Activated naive CD4-positive, alpha-beta T cell treated with anti-CD3 and anti-CD28 coated beads for 36 hours (primary cell): ENCODE measurements at regions of chr5 and their contacts with region 1.

Region 1: DNA sequence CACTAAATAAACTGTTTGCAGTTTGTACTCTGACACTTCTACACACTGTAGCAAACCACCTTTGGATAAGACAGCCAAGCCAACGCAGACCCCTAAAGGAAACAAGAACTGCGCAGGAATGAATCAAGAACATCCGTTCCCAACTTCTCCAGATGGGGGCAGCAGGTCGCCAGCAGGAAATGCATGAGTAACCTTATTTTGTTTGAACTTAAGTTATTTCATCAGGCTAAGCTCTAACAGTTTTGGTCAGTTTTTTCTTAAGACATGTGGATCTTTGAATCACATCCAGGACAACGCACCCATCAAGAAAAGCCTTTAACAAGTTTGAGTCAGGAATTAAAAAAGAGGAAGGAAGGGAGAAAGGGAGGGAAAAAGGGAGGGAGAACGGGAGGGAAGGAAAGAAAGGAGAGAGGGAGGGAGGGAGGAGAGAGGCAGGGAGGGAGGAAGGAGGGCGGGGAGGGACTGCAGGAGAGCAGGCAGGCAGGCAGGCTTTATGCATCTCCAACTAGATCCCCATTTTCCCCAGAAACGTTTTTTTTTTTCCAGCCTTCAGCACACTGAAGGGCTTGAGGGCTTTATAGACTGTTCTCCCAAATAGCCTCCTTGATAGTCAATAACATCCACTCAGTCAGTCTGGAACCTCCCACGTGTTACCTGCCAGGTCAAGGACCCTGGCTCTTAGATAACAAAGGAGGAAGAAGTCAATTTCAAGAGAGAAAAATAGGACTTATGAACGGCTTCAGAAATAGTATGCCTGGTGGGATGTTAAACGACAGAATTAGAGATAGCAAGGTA is 22.2 kb downstream of the BHMT start:
- DNase-seq: peak; percentile 88
- H3K4me3 Mint-ChIP-seq: peak overlapping the region; percentile 67
- H3K27ac Mint-ChIP-seq: peak overlapping the region; percentile 52
- H3K4me1 Mint-ChIP-seq: peaks cover 12% of the 10 kb centered on the region
- H3K27me3 Mint-ChIP-seq: peaks cover 4% of the 10 kb centered on the region

Region 2: GRCh38 chr5:78320401-78320800 is 813.5 kb before region 1 on chr5:
- CTCF ChIA-PET with region 1: no interaction called
- intact Hi-C with region 1: loop called (anchors 5 kb)
- DNase-seq: peak; percentile 22
- H3K4me3 Mint-ChIP-seq: no peak overlapping the region
- H3K27ac Mint-ChIP-seq: no peak overlapping the region
- H3K4me1 Mint-ChIP-seq: no peaks in the 10 kb centered on the region
- H3K27me3 Mint-ChIP-seq: no peaks in the 10 kb centered on the region

Region 3: GRCh38 chr5:78984439-78985115 is 149.3 kb before region 1 on chr5:
- CTCF ChIA-PET with region 1: interaction called, 10 read pairs
- intact Hi-C with region 1: loop called (anchors 1 kb)
- DNase-seq: peak; percentile 81
- H3K4me3 Mint-ChIP-seq: peak overlapping the region; percentile 84
- H3K27ac Mint-ChIP-seq: peak overlapping the region; percentile 87
- H3K4me1 Mint-ChIP-seq: peaks cover 35% of the 10 kb centered on the region
- H3K27me3 Mint-ChIP-seq: no peaks in the 10 kb centered on the region

Region 4: DNA sequence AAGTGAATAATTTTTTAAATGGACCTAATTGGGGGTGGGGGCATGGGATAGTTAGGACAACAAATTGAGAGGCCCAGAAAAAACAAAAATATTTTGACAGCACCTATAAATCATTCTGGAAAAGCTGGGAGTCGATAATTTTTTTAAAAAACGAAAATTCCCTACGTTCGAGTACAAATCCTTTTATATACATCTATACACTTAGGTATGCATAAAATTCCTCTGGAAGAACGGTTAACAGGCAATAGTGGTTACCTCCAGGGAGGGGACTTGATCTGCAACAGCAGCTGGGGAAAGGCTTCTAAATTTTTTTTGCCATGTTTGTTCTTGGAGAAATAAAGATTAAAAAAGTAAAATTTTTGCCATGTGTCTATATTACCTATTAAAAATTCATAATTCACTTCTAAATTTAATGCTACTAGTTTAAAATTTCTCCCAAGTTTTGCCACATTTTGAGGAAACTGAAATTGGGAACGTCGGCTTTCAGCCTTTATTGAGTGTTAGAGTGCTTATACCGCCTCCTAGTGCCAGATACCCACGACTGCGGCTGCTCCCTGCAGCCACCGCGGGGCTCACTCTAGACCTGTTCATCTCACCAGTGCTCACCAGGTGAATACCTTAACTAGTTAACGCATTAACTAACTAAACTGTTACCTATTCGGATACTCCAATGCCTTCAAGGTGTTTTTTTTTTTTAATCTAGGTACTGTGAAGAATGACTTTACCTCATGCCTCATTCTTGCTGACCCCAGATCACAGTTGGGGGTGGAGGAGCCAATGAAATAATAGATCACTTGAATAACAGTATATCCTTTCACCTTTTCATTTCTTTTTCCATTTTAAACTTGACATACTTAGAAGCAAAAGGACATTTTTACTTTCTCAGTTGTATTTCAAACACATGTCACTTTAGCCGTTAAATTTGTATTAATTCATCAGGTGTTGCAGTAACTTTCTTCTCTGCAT is 24.0 kb before region 1 on chr5:
- CTCF ChIA-PET with region 1: interaction called, 14 read pairs
- intact Hi-C with region 1: loop called (anchors 2 kb)
- DNase-seq: peak; percentile 63
- H3K4me3 Mint-ChIP-seq: no peak overlapping the region
- H3K27ac Mint-ChIP-seq: no peak overlapping the region
- H3K4me1 Mint-ChIP-seq: peaks cover 4% of the 10 kb centered on the region
- H3K27me3 Mint-ChIP-seq: peaks cover 46% of the 10 kb centered on the region

Region 5: GRCh38 chr5:79157305-79157704 is 23.5 kb after region 1 on chr5:
- CTCF ChIA-PET with region 1: interaction called, 21 read pairs
- intact Hi-C with region 1: no loop called
- DNase-seq: no peak
- H3K4me3 Mint-ChIP-seq: no peak overlapping the region
- H3K27ac Mint-ChIP-seq: no peak overlapping the region
- H3K4me1 Mint-ChIP-seq: no peaks in the 10 kb centered on the region
- H3K27me3 Mint-ChIP-seq: peaks cover 7% of the 10 kb centered on the region

Region 6: DNA sequence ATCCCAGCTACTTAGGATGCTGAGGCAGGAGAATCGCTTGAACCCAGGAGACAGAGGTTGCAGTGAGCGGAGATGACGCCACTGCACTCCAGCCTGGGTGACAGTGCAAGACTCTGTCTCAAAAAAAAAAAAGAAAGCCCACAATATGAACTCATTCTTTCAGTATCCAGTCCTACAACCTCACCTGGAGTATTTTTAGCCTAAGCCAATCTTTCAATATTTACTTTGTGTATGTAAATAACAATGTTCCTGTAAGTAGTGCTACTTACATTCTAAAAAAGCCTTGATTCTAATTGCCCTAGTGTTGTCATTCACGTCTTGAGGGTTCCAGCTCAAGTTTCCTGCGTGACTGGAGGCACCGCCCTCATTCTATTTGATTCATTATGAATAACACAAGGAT is 39.8 kb after region 1 on chr5:
- CTCF ChIA-PET with region 1: no interaction called
- intact Hi-C with region 1: no loop called
- DNase-seq: no peak
- H3K4me3 Mint-ChIP-seq: no peak overlapping the region
- H3K27ac Mint-ChIP-seq: no peak overlapping the region
- H3K4me1 Mint-ChIP-seq: no peaks in the 10 kb centered on the region
- H3K27me3 Mint-ChIP-seq: no peaks in the 10 kb centered on the region

Region 7: DNA sequence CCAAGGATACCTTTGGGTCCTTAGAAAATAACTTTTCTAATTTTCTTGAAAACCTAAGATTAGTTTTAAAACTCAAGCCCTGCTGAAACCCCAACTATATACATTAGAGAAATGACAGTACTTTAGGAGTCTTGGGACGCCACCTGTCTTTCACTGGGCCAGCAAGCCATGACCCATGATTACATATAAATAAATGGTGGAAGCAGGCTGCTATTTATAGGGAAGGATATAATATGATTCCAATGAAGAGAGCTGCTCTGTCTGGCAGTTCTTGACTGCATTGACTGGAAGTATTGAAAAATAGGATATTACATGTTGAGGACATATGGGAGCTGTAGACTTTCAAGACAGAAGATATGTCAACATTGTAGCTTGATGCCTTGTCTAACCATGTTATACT is 109.4 kb after region 1 on chr5:
- CTCF ChIA-PET with region 1: no interaction called
- intact Hi-C with region 1: loop called (anchors 1 kb)
- DNase-seq: no peak
- H3K4me3 Mint-ChIP-seq: no peak overlapping the region
- H3K27ac Mint-ChIP-seq: no peak overlapping the region
- H3K4me1 Mint-ChIP-seq: peaks cover 65% of the 10 kb centered on the region
- H3K27me3 Mint-ChIP-seq: no peaks in the 10 kb centered on the region

Region 8: DNA sequence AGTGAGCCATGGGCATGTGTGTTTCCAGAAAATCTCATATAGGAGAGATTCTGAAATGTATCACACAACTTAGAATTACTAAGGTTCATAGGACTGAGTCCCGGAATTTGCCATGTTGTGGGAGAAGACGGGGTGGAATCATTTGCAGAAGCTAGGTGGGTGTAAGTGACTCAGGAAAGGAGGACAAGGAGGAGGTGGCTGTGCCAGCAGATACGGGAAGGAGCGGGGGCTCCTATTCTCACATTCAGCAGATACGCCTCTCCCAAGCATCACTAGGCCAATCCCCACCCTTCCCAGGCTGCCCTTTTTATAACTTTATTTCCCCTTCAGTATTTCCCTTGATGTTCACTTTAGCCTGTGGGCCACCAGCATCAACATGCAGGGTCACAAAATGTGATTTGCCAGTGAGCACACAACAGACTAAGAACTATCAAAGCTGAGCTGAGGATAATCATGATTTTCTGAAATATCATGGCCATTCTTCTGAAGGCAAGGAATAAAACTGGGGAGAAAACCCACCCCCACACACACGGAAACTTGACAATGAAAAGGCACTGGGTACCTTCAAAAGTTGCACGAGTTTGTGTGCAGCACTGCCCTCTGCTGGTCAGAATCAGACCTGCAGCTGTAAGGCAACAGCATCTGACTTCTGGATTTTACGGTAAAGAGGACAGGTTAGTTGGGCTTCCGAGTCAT is 724.0 kb after region 1 on chr5:
- CTCF ChIA-PET with region 1: no interaction called
- intact Hi-C with region 1: loop called (anchors 2 kb)
- DNase-seq: peak; percentile 92
- H3K4me3 Mint-ChIP-seq: no peak overlapping the region
- H3K27ac Mint-ChIP-seq: no peak overlapping the region
- H3K4me1 Mint-ChIP-seq: no peaks in the 10 kb centered on the region
- H3K27me3 Mint-ChIP-seq: no peaks in the 10 kb centered on the region